ENCODE measurements at regions of chr21 and their contacts with region 1.

Region 1: DNA sequence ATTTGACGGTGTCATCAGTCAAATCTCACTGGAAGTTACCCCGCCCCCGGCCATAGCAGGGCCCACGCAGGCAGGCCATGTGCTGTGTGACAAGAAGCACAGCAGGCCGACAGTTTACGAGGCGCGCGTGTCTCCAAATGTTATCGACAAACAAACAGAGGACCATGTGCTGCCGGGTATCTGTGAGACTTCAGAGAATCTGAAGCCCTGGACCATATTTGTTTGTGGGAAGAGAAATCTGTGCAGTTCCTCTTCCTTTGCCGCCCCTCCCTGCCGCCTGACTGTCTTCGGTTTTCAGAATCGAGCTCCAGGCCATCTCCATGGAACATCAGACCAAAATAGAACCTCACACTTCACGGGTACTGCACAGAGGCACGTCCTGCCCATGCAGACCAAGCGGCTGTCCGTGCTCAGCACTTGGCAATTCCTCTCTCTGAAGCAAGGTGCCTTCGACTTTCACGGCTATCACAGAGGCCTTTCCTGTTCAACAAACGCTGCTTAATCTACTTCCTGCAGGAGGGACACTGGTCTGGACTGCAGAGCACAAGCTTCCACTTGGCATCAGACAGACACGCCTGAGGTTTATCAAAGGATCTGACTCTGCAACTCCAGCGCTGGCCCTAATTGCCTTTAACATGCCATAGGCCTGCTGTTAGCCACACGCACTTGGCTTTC is 135.7 kb upstream of the KRTAP19-8 start:
- DNase-seq: no peak
- ATAC-seq: peak; percentile 28
- H3K4me3 Mint-ChIP-seq: no peak overlapping the region
- H3K27ac Mint-ChIP-seq: peak overlapping the region; percentile 54
- H3K4me1 Mint-ChIP-seq: peaks cover 52% of the 10 kb centered on the region
- H3K27me3 Mint-ChIP-seq: no peaks in the 10 kb centered on the region
- CTCF ChIP-seq: no peak

Region 2: DNA sequence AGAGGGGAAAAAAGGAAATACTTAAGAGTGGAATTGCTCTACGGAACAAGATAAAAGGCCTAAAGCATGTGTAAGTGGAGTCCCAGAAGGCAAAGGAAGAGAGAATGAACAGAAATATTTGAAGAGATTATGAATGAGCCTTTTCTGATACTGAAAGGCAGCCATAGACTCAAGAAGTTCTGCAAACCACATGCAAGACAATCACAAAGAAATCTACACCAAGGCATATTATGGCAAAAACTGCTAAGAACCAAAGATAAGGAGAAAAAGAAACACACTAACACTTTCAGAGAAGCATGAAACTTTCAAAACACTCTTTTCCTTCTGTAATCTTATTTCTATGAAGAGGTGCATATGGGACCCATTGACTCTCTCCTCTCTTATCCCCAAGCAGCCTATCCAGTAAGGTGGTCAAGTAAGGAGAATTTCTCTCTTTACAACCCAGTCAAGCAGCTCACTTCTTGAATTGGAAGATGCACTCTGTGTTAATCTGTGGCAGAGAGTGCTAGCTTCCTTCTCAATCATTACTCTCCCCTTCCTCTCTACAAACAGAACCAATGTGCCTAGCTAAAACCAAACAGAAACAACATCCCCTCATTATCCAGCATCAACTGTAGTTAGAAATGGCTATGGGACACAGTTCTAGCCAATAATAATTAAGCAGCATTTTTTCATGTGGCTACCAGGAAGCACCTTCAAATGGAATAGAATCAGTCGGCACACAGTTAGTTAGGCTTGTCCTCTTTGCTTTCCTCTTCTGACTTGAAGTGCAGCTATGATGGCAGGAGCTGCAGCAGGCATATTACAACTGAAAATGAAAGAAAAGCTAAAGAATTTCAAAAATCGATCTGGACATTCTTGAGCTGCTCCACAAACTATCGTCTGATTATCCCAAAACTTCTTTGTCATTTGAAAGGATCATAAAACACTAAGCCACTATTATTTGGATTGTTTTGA is 161.6 kb before region 1 on chr21:
- CTCF ChIA-PET with region 1: no interaction called
- POLR2A ChIA-PET with region 1: no interaction called
- intact Hi-C with region 1: no loop called
- DNase-seq: no peak
- ATAC-seq: peak; percentile 45
- H3K4me3 Mint-ChIP-seq: peak overlapping the region; percentile 6
- H3K27ac Mint-ChIP-seq: peak overlapping the region; percentile 47
- H3K4me1 Mint-ChIP-seq: peaks cover 19% of the 10 kb centered on the region
- H3K27me3 Mint-ChIP-seq: no peaks in the 10 kb centered on the region
- CTCF ChIP-seq: no peak

Region 3: DNA sequence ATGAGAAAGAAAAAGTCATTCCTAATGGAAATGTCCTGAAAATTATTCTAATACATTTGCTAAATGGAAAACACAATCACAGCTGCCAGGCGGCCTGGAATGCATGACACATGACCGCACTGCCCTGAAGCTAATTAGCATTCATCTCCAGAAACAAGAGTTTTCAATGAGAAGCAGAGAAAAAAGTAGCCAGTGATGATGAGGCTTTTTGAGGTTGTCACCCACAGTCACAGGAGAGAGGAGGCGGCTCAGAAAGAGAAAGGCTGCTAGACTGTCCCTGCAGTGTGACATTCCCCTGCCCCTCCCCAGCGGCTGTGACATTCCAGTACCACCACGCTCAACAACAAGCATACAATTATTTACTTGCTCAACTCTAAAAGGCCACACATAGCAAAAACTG is 12.9 kb before region 1 on chr21:
- CTCF ChIA-PET with region 1: interaction called, 11 read pairs
- POLR2A ChIA-PET with region 1: interaction called, 19 read pairs
- intact Hi-C with region 1: no loop called
- DNase-seq: peak; percentile 31
- ATAC-seq: peak; percentile 49
- H3K4me3 Mint-ChIP-seq: no peak overlapping the region
- H3K27ac Mint-ChIP-seq: peak overlapping the region; percentile 36
- H3K4me1 Mint-ChIP-seq: peaks cover 75% of the 10 kb centered on the region
- H3K27me3 Mint-ChIP-seq: no peaks in the 10 kb centered on the region
- CTCF ChIP-seq: no peak

Region 4: DNA sequence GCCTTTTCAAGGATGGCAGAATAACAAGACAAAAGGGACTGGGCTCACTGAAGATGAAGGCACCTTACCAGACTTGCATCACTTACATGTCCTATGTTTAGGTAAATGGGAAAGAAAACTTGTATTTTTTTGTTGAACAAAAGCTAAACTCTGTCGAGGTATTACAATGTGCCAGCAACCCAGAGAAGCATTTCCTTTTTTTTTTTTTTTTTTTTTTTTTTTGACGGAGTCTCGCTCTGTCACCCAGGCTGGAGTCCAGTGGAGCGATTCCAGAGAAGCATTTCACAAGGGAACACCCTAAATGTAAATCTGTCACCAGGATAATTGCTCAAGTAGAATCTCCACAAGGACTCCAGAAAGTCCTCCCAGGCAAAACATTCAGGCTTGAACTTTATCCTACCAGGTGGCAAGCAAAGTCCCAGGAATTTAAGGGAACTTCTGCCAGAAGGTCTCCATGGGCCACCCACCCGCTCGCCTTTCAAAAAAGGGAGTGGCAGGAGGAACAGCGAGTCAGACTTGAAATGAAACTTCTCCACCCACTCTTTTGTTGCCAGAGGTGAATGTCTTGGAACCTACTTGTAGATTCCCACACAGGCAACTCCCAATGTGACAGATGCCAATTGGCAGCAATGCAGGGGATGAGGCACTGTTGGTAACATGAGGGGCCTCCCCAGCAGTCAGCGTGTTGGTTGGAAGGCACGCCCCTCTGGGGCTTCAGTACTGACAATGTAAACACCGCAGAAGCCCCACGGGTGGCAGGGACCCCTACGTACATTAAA is 45.0 kb after region 1 on chr21:
- CTCF ChIA-PET with region 1: no interaction called
- POLR2A ChIA-PET with region 1: no interaction called
- intact Hi-C with region 1: no loop called
- DNase-seq: no peak
- ATAC-seq: no peak
- H3K4me3 Mint-ChIP-seq: no peak overlapping the region
- H3K27ac Mint-ChIP-seq: no peak overlapping the region
- H3K4me1 Mint-ChIP-seq: peaks cover 10% of the 10 kb centered on the region
- H3K27me3 Mint-ChIP-seq: no peaks in the 10 kb centered on the region
- CTCF ChIP-seq: no peak

Region 5: GRCh38 chr21:31386006-31386405 is 212.0 kb after region 1 on chr21:
- CTCF ChIA-PET with region 1: no interaction called
- POLR2A ChIA-PET with region 1: no interaction called
- intact Hi-C with region 1: no loop called
- DNase-seq: no peak
- ATAC-seq: peak; percentile 45
- H3K4me3 Mint-ChIP-seq: no peak overlapping the region
- H3K27ac Mint-ChIP-seq: no peak overlapping the region
- H3K4me1 Mint-ChIP-seq: peaks cover 15% of the 10 kb centered on the region
- H3K27me3 Mint-ChIP-seq: peaks cover 2% of the 10 kb centered on the region
- CTCF ChIP-seq: no peak